ENCODE measurements at regions of chr2 and their contacts with region 1.

Region 1: DNA sequence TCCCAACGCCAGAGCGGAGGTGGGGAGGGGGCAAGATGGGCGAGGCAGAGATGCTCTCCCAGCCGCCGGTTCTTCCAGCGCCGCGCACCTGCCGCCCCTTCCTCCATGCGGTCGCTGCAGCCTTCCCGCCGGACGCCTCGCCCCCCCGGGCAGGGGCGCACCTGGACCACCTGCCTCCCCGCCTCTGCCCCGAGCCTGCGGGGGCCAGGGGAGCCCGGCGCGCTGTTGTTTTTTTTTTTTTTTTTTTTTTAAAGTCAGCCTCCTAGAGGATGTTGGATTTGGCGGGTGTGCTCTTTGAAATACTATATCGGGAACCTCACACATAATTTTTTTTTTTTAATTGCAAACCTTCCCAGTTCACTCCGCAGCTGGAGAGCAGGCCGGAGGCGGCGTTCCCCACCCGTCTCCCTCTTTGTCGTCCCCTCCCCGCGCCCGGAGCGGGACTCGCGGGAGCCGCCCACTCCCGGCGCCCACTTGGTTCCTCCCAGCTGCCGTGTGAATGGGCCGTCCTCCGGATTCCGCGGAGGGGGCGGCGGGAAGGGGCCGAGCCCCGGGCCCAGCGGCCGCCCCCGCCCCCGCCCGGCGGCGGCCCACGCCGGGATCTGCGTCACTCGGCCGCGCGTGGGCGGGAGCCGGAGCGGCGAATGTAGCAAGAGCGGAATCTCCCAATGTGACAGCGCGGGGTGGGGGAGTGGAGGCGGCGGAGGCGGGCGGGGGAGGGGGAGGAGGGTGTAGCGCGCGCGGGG is 421 bp upstream of the NAB1 start:
- DNase-seq: peak; percentile 91 to 94 (median 92)
- H3K4me3 ChIP-seq: peak overlapping the region; percentile 31 to 57
- H3K4me3 Mint-ChIP-seq: peak overlapping the region; percentile 78 to 91 (median 85)
- H3K27ac ChIP-seq: peak overlapping the region; percentile 72
- H3K27ac Mint-ChIP-seq: peak overlapping the region; percentile 90 to 96 (median 93)
- H3K4me1 ChIP-seq: peaks cover 38% of the 10 kb centered on the region
- H3K4me1 Mint-ChIP-seq: peaks cover 19 to 49% (median 29%) of the 10 kb centered on the region in 4 donors
- H3K27me3 ChIP-seq: no peaks in the 10 kb centered on the region
- H3K27me3 Mint-ChIP-seq: no peaks in the 10 kb centered on the region

Region 2: DNA sequence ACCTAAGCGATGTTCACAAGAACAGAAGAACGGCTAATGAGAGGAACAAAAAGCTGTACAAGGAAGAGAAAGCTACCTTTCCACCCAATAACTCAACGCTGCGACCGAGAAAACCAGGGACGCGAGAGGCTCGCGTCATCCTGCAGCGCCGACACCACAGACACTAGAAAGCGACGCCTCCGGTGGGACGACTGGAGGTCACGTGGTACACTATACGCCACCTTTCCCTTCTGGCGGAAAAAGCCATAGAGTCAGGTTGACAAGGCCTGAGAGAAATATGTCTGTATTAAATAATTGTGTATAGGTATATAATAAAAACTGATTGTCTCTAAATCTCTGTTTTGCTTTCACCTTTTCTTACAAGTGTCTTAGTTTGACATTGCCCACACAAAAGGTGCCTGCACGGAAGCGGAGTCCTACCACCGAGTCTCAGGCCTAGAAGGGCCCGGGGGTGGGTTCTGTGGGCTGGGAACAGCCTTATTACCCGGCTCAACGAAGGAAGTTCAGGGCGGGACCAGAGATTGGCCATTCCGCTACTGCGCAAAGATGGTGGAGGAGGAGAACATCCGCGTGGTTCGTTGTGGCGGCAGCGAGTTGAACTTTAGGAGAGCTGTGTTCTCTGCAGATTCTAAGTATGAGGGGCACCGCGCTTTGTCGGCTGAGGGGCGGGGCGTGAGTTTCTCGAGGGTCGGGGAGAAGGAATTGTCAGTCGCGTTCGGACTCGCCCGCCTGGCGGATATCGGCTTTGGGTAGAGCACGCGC is 1207.3 kb before region 1 on chr2 and contains the start of gene WDR75:
- CTCF ChIA-PET with region 1: no interaction called
- POLR2A ChIA-PET with region 1: no interaction called
- intact Hi-C with region 1: loop called (anchors 2 kb)
- DNase-seq: peak; percentile 93 to 96 (median 95)
- H3K4me3 ChIP-seq: peak within 1 kb of the TSS; percentile 87 to 99
- H3K4me3 Mint-ChIP-seq: peak within 1 kb of the TSS in 6 of 8 donors; percentile 98 to 100 (median 100)
- H3K27ac ChIP-seq: peak within 1 kb of the TSS; percentile 89
- H3K27ac Mint-ChIP-seq: peak within 1 kb of the TSS; percentile 97 to 100 (median 100)
- H3K4me1 ChIP-seq: peaks cover 49% of the 10 kb centered on the region
- H3K4me1 Mint-ChIP-seq: peaks cover 0 to 18% (median 11%) of the 10 kb centered on the region in 4 donors
- H3K27me3 ChIP-seq: no peaks in the 10 kb centered on the region
- H3K27me3 Mint-ChIP-seq: no peaks in the 10 kb centered on the region
- total RNA-seq, gene WDR75: 60.8 to 61.4 TPM

Region 3: GRCh38 chr2:189783927-189784867 is 864.3 kb before region 1 on chr2 and contains the starts of genes ORMDL1 and PMS1:
- CTCF ChIA-PET with region 1: no interaction called
- POLR2A ChIA-PET with region 1: no interaction called
- intact Hi-C with region 1: loop called (anchors 10 kb)
- DNase-seq: peak; percentile 93 to 96 (median 96)
- H3K4me3 ChIP-seq: peak within 1 kb of the TSS; percentile 71 to 74
- H3K4me3 Mint-ChIP-seq: peak within 1 kb of the TSS; percentile 92 to 97 (median 94)
- H3K27ac ChIP-seq: peak within 1 kb of the TSS; percentile 93
- H3K27ac Mint-ChIP-seq: peak within 1 kb of the TSS; percentile 96 to 97 (median 97)
- H3K4me1 ChIP-seq: peaks cover 52% of the 10 kb centered on the region
- H3K4me1 Mint-ChIP-seq: peaks cover 43 to 64% (median 54%) of the 10 kb centered on the region in 4 donors
- H3K27me3 ChIP-seq: no peaks in the 10 kb centered on the region
- H3K27me3 Mint-ChIP-seq: no peaks in the 10 kb centered on the region
- total RNA-seq, gene ORMDL1: 187 to 190 TPM
- total RNA-seq, gene PMS1: 29.1 to 35.1 TPM

Region 4: DNA sequence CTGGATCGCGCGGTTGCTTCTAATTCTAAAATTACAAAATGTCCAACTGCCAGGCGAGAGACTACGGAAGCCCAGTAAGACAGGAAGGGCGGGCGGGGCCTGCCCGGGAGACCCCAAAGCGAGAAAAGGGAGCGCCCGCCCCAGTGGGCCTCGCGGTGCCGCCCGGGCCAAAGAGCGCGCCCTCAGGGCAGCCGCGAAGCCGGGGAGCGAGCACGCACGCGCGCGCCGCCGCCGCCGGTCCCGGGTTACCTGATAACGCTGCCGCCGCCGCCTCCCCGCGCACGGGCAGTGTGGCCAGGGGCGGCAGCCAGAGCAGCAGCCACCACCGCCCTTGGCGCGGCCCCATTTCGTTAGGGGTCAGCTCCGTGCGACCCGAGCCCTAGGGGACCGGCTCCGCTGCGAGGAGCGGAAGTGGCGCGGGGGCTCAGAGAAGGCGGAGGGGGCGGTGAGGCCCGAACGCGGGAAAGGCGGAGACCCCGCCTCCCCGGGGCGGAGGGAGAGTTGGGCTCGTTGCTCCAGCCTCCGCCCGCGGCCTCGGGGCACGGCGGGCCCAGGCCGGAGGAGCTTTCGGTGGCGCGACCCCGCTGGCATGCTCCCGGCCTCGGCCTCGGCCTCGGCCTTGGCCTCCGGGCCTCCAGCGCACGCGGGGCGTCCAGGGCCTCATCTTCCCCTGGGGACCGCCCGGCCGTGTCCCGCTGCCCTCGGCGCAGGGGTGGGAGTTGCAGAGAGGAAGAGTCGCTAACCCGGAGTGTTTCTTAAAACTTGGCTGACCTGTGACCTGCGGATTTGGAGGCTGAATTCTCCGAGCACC is 113.9 kb before region 1 on chr2 and contains the start of gene NEMP2:
- CTCF ChIA-PET with region 1: no interaction called
- POLR2A ChIA-PET with region 1: interaction called, 20 read pairs
- intact Hi-C with region 1: loop called (anchors 1 kb)
- DNase-seq: peak; percentile 75 to 87 (median 81)
- H3K4me3 ChIP-seq: peak within 1 kb of the TSS; percentile 82 to 89
- H3K4me3 Mint-ChIP-seq: peak within 1 kb of the TSS; percentile 94 to 99 (median 98)
- H3K27ac ChIP-seq: peak within 1 kb of the TSS; percentile 87
- H3K27ac Mint-ChIP-seq: peak within 1 kb of the TSS; percentile 99 to 100 (median 100)
- H3K4me1 ChIP-seq: peaks cover 46% of the 10 kb centered on the region
- H3K4me1 Mint-ChIP-seq: peaks cover 42 to 66% (median 52%) of the 10 kb centered on the region in 4 donors
- H3K27me3 ChIP-seq: no peaks in the 10 kb centered on the region
- H3K27me3 Mint-ChIP-seq: no peaks in the 10 kb centered on the region
- total RNA-seq, gene NEMP2: 20.7 to 21.2 TPM

Region 5: GRCh38 chr2:190664240-190664639 is 15.8 kb after region 1 on chr2:
- CTCF ChIA-PET with region 1: interaction called, 3 read pairs
- POLR2A ChIA-PET with region 1: interaction called, 5 read pairs
- intact Hi-C with region 1: loop called (anchors 1 kb)
- DNase-seq: no peak
- H3K4me3 ChIP-seq: no peak overlapping the region
- H3K4me3 Mint-ChIP-seq: no peak overlapping the region
- H3K27ac ChIP-seq: no peak overlapping the region
- H3K27ac Mint-ChIP-seq: peak overlapping the region in 4 of 7 donors; percentile 17 to 53 (median 36)
- H3K4me1 ChIP-seq: peaks cover 33% of the 10 kb centered on the region
- H3K4me1 Mint-ChIP-seq: peaks cover 18 to 31% (median 25%) of the 10 kb centered on the region in 4 donors
- H3K27me3 ChIP-seq: no peaks in the 10 kb centered on the region
- H3K27me3 Mint-ChIP-seq: no peaks in the 10 kb centered on the region